ENCODE measurements at regions of chr13 and their contacts with region 1.

Region 1: GRCh38 chr13:112689303-112690165 is at the start of gene ATP11A:
- DNase-seq: peak; percentile 73
- ATAC-seq: peak; percentile 83
- H3K4me3 Mint-ChIP-seq: peak within 1 kb of the TSS; percentile 87
- H3K27ac Mint-ChIP-seq: peak within 1 kb of the TSS; percentile 84
- H3K4me1 Mint-ChIP-seq: peaks cover 42% of the 10 kb centered on the region
- H3K27me3 Mint-ChIP-seq: peaks cover 1% of the 10 kb centered on the region
- CTCF ChIP-seq: no peak
- total RNA-seq, gene ATP11A: 43.7 and 49.6 TPM in 2 replicates

Region 2: GRCh38 chr13:112587212-112587763 is 102.2 kb before region 1 on chr13:
- CTCF ChIA-PET with region 1: no interaction called
- POLR2A ChIA-PET with region 1: interaction called, 4 read pairs
- intact Hi-C with region 1: loop called (anchors 1 kb)
- DNase-seq: peak; percentile 58
- ATAC-seq: peak; percentile 59
- H3K4me3 Mint-ChIP-seq: peak overlapping the region; percentile 94
- H3K27ac Mint-ChIP-seq: peak overlapping the region; percentile 84
- H3K4me1 Mint-ChIP-seq: peaks cover 44% of the 10 kb centered on the region
- H3K27me3 Mint-ChIP-seq: peaks cover 4% of the 10 kb centered on the region
- CTCF ChIP-seq: no peak

Region 3: DNA sequence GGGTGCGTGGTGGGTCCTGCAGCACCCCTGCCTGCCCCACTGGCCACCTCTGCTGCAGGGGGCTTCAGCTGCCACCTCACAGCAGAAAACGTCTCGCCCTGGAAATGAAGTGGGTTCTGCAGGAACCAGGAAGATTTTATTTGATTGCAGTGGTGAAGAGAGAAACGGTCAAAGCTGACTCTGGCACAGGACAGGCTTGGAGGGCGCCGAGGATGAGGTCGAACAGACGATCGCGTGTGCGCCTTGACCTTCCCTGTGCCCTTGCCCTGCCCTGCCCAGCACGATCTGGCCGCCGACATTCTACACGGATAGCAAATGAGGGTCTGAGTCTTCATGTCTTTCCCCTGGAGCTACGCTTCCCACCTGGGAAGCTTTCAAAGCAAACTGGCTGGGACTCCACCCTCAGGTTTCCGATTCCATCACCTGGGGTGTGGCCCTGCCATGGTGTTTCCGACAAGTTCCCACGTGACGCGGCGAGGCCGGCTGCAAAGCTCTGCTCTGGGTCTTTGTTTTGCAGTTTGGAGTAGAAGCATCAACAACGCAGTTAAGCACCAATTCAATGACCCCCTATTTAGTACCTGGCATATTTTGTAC is 51.3 kb before region 1 on chr13:
- CTCF ChIA-PET with region 1: no interaction called
- POLR2A ChIA-PET with region 1: no interaction called
- intact Hi-C with region 1: loop called (anchors 2 kb)
- DNase-seq: no peak
- ATAC-seq: no peak
- H3K4me3 Mint-ChIP-seq: no peak overlapping the region
- H3K27ac Mint-ChIP-seq: no peak overlapping the region
- H3K4me1 Mint-ChIP-seq: peaks cover 10% of the 10 kb centered on the region
- H3K27me3 Mint-ChIP-seq: peaks cover 34% of the 10 kb centered on the region
- CTCF ChIP-seq: no peak

Region 4: GRCh38 chr13:112767506-112768471 is 78.3 kb after region 1 on chr13:
- CTCF ChIA-PET with region 1: no interaction called
- POLR2A ChIA-PET with region 1: no interaction called
- intact Hi-C with region 1: loop called (anchors 5 kb)
- DNase-seq: peak; percentile 22
- ATAC-seq: peak; percentile 85
- H3K4me3 Mint-ChIP-seq: peak overlapping the region; percentile 80
- H3K27ac Mint-ChIP-seq: peak overlapping the region; percentile 77
- H3K4me1 Mint-ChIP-seq: peaks cover 25% of the 10 kb centered on the region
- H3K27me3 Mint-ChIP-seq: no peaks in the 10 kb centered on the region
- CTCF ChIP-seq: no peak

Region 5: GRCh38 chr13:112803422-112803821 is 113.9 kb after region 1 on chr13:
- CTCF ChIA-PET with region 1: no interaction called
- POLR2A ChIA-PET with region 1: no interaction called
- intact Hi-C with region 1: loop called (anchors 10 kb)
- DNase-seq: no peak
- ATAC-seq: peak; percentile 40
- H3K4me3 Mint-ChIP-seq: no peak overlapping the region
- H3K27ac Mint-ChIP-seq: peak overlapping the region; percentile 60
- H3K4me1 Mint-ChIP-seq: peaks cover 26% of the 10 kb centered on the region
- H3K27me3 Mint-ChIP-seq: no peaks in the 10 kb centered on the region
- CTCF ChIP-seq: no peak

Region 6: DNA sequence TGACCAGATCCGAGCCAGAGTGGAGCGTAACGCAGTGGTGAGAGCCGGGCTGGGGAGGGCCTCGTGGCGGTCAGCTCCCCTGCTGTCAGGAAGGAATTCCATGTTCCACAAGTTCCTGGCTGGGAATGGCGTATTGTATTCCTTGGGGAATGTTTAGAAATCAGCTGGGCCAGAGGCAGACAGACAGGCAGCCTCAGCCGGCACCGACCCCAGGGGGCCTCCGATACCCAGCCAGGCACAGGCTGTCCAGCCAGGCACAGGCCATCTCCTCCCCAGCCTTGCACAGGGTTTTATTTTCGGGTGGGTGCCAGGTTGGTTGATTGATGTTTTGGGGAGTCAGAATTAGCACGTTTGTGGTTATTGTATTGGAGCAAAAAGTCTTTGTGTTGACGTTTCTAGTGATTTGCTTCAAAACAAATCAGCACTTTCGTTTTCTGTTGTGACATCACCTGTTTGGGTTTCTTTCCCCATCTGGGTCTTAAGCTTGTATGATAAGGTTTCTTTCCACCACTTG is 152.9 kb after region 1 on chr13:
- CTCF ChIA-PET with region 1: no interaction called
- POLR2A ChIA-PET with region 1: no interaction called
- intact Hi-C with region 1: no loop called
- DNase-seq: no peak
- ATAC-seq: no peak
- H3K4me3 Mint-ChIP-seq: no peak overlapping the region
- H3K27ac Mint-ChIP-seq: no peak overlapping the region
- H3K4me1 Mint-ChIP-seq: no peaks in the 10 kb centered on the region
- H3K27me3 Mint-ChIP-seq: no peaks in the 10 kb centered on the region
- CTCF ChIP-seq: no peak

Measured in activated B cell treated with CpG ODN at 0.5 μM for 24 hours (primary cell).